Sciatic nerve (tissue), 2 donors: ENCODE measurements at regions of chr18 and their contacts with region 1.

Region 1: DNA sequence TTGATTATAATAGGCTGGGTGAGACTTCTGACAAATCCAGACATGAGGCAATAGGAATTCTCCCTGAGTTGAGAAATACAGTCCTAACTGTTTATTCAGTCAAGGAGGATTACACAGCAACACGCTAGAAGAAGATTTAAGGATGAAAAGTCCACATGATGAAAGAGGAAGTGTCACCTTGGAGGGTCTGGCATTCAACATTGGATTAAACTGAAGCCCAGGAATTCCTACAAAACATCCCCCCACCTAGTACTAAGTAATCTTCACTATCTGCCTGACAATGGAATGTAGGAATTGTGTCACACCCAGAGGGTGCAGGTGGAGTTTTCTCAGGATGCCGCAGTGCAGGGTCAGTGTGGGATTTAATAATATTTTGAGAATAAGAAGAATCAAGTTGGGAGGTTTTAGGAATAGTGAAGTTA is 142.4 kb downstream of the SOCS6 start:
- DNase-seq: no peak
- ATAC-seq: peak; percentile 30

Region 2: GRCh38 chr18:70195852-70196434 is 235.3 kb before region 1 on chr18:
- intact Hi-C with region 1: loop called (anchors 5 kb)
- DNase-seq: no peak
- ATAC-seq: peak; percentile 30

Region 3: DNA sequence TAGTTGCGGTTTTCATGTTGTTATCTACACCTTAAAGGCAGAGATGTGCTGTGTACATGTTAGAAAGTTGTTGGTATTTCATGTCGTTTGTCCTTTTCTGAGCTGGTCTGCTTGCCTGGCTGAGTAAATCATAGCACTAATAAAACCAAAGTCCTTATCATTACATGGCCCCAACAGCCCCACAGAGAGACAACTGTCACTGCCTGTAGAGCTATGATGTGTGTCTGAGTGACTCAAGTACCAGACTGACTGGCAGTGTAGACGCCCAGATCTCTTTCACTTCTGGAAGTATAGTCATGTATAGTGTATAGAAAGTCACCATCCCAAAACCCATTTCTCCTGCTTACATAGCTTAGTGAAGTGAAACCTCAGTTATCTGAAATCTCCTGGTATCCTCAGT is 138.0 kb before region 1 on chr18:
- intact Hi-C with region 1: no loop called
- DNase-seq: no peak
- ATAC-seq: no peak